ENCODE measurements at regions of chr15 and their contacts with region 1.

Region 1: DNA sequence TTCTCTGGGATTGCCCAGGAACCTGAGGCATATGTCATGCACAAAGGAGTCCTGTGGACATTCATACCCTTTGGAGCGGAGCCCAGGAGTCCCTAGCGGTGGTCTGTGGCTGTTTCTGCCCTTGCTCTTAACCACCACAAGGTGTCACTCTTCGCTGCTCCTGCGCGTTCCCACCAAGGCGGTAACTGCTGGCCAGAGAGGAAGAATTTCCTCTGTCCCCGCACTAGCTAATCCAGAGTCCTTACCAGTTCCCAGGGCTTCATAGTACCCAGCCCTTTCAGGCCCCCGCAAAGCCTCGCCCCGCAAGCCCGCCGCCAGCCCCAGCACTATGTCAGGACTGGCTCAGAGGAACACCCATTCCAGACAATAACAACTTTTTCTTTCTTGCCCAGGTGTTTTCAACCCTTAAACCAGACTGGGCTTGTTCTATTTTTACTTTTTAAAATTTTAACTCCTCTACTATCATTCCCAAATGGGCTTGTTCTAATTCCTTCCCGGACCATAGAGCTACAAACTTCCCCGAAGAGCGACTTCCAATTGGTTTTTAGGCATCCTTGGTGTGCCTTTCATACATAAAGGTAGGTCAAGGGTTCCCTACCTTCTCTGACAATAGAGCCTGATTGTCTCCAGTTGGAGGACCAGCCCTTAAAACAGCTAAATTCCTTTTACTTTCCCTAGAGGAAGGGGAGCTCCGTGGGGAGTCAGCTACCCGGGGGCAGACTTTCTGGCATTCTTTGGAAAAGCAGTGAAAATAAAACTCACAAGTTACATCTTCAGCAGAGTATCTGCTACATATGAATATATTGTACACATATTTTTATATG is 31.8 kb upstream of the ZNF774 start:
- DNase-seq: peak; percentile 77 to 87 (median 83)
- H3K4me3 ChIP-seq: peak overlapping the region in 5 of 7 experiments; percentile 27 to 48 (median 35)
- H3K27ac ChIP-seq: no peak overlapping the region
- H3K4me1 ChIP-seq: peaks cover 0 to 5% (median 2%) of the 10 kb centered on the region in 4 experiments
- H3K27me3 ChIP-seq: peaks cover 0 to 2% (median 0%) of the 10 kb centered on the region in 5 experiments

Region 2: GRCh38 chr15:89690276-89691218 is 629.7 kb before region 1 on chr15 and contains the starts of genes PEX11A and WDR93:
- CTCF ChIA-PET with region 1: no interaction called
- POLR2A ChIA-PET with region 1: no interaction called
- DNase-seq: peak; percentile 60 to 64 (median 63)
- H3K4me3 ChIP-seq: peak within 1 kb of the TSS; percentile 75 to 99 (median 87)
- H3K27ac ChIP-seq: peak within 1 kb of the TSS in 1 of 2 experiments; percentile 55
- H3K4me1 ChIP-seq: peaks cover 0 to 17% (median 7%) of the 10 kb centered on the region in 4 experiments
- H3K27me3 ChIP-seq: no peaks in the 10 kb centered on the region

Region 3: DNA sequence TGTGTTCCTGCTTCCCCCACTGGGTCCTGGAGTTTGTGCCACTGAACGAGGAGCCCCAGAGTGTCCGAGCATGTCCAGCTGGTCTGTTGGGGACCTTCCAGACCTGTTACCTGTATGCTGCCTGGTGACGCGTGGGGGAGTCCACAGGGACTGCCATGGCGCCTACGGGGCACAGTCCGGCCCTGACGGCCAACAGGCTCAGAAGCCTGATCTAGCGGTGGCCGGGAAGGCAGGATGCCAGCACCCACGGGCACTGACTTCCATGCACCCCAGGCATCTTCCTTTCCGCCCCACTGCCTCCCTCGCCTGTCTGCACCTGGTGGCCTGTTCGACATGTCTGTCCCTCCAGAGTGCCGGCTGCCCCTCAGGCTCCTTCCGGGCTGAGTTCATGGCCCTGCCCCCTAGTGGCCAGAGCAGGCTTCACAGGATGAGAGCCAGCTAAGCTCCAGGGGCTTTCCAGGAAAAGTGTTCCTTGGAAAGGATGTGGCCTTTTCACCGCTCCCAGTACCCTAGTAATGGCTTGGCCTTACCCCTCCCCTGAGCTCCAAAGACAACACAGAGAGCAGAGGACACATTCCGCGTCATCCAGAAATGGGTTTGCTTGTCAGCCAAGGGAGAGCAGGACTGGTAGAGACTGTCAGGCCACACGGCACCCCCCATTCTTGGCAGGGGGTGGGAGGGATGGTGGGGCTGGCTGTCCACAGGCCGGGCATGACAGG is 19.1 kb before region 1 on chr15:
- CTCF ChIA-PET with region 1: interaction called, 29 read pairs
- POLR2A ChIA-PET with region 1: no interaction called
- DNase-seq: peak; percentile 48 to 58 (median 55)
- H3K4me3 ChIP-seq: peak overlapping the region in 1 of 7 experiments; percentile 26
- H3K27ac ChIP-seq: no peak overlapping the region
- H3K4me1 ChIP-seq: peaks cover 0 to 4% (median under 1%) of the 10 kb centered on the region in 4 experiments
- H3K27me3 ChIP-seq: no peaks in the 10 kb centered on the region

Region 4: DNA sequence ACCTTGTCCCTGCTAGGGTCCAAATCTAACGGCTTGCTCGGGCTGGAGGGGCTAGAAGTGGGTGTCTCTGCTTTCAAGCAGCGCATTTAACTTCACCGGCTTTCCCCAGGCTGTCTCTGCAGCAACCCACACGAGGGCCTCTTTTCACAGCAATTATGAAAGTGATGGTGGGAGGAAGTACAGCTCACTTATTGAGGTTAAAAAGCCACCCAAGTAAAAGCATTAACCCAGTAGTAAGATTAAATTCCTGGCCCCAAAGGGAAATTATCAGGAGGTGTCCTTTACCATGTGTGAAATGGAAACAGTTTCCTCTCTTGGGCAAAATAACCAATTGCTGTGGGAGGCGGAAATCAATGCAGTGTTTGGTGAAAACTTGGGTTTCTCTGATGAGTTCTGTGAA is 13.7 kb before region 1 on chr15:
- CTCF ChIA-PET with region 1: interaction called, 29 read pairs
- POLR2A ChIA-PET with region 1: no interaction called
- DNase-seq: peak in 2 of 3 donors; percentile 30 to 44
- H3K4me3 ChIP-seq: no peak overlapping the region
- H3K27ac ChIP-seq: no peak overlapping the region
- H3K4me1 ChIP-seq: peaks cover 0 to 17% (median 4%) of the 10 kb centered on the region in 4 experiments
- H3K27me3 ChIP-seq: no peaks in the 10 kb centered on the region

Region 5: DNA sequence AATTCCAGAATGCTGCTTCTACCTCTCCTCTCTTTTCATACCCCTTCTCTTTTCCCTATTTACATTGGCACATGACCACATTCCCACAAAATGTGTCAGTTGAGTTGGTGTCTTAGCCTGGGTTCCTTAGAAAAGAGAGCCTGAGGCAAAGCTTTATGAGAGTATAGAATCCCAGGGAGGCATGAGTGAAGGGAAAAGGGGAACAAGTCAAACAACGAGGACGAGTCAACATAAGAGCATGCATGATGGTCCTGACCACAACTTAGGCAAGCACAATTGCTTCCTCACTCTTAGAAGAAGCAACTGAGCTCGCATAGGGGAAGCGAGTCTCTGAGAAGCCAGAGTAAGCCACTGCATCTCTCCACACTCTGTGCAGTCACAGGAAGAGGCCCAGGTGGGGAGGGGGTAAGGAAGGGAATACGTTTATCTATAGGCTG is 16.4 kb after region 1 on chr15:
- CTCF ChIA-PET with region 1: interaction called, 18 read pairs
- POLR2A ChIA-PET with region 1: interaction called, 4 read pairs
- DNase-seq: peak; percentile 52 to 89 (median 84)
- H3K4me3 ChIP-seq: peak overlapping the region in 2 of 7 experiments; percentile 20 to 33
- H3K27ac ChIP-seq: no peak overlapping the region
- H3K4me1 ChIP-seq: peaks cover 8 to 23% (median 10%) of the 10 kb centered on the region in 4 experiments
- H3K27me3 ChIP-seq: no peaks in the 10 kb centered on the region

Region 6: GRCh38 chr15:90362936-90363212 is 42.6 kb after region 1 on chr15:
- CTCF ChIA-PET with region 1: interaction called, 37 read pairs
- POLR2A ChIA-PET with region 1: no interaction called
- DNase-seq: peak in 1 of 3 donors; percentile 23
- H3K4me3 ChIP-seq: no peak overlapping the region
- H3K27ac ChIP-seq: no peak overlapping the region
- H3K4me1 ChIP-seq: peaks cover 0 to 27% (median 5%) of the 10 kb centered on the region in 4 experiments
- H3K27me3 ChIP-seq: peaks cover 0 to 10% (median 4%) of the 10 kb centered on the region in 5 experiments

Region 7: DNA sequence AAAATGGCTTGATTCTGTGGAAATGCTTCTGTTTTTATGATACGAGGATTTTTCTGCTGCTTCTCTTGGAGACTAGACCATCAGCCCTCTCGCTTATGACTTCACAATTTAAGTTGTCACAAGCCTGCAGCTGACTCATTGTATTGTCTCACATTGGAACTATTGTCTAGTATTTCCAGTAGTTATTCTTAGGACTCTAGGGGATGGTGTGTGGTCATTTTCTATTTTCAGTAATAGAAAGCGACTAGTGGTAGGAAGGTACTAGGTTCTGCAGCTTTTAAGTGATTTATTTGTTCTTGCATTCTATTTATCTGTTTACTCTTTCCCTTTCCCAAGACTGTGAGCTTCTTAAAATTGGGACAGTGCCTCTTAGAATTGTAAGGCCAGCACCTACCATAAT is 143.1 kb after region 1 on chr15:
- CTCF ChIA-PET with region 1: interaction called, 10 read pairs
- POLR2A ChIA-PET with region 1: no interaction called
- DNase-seq: no peak
- H3K4me3 ChIP-seq: no peak overlapping the region
- H3K27ac ChIP-seq: no peak overlapping the region
- H3K4me1 ChIP-seq: no peaks in the 10 kb centered on the region
- H3K27me3 ChIP-seq: no peaks in the 10 kb centered on the region

Measured in common myeloid progenitor, CD34-positive (primary cell).